ENCODE measurements at regions of chr20 and their contacts with region 1.

Region 1: DNA sequence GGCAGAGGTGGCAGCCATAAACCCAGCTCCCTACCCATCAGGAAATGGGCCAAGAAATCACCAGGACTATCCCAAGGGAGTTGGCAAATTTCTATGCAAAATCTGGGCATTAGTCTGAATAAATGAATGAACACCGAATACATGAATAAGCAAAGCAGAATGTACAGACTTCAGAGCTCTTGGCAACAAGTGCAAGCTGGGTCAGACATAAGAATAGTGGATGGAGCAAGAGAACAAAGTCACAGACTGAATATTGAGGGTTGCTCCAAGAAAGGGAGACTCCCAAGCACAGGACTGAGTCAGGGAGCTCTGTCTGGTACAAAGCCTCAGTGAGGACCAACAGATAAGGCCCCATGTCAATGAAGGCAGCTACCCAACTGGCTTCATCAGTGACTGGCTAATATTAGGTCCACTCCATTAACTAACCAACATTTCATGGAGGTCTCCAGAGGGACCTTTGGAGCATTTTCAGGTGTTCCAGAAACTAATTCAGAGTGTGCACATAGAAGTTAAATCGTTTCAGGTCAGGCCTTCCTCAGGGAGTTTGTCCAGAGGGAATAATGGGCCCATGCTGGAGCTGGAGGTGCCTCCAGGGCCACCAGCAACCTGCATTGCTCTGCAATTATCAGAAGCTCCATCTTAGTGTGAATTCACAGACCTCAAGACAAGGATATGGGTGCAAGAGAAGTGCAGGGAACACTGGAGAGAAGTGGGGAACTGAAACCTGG is 191.5 kb upstream of the RALGAPA2 start:
- DNase-seq: no peak
- H3K4me3 ChIP-seq: no peak overlapping the region
- H3K27ac ChIP-seq: no peak overlapping the region
- H3K4me1 ChIP-seq: no peaks in the 10 kb centered on the region
- H3K27me3 ChIP-seq: no peaks in the 10 kb centered on the region
- CTCF ChIP-seq: no peak
- POLR2A ChIP-seq: no peak

Region 2: DNA sequence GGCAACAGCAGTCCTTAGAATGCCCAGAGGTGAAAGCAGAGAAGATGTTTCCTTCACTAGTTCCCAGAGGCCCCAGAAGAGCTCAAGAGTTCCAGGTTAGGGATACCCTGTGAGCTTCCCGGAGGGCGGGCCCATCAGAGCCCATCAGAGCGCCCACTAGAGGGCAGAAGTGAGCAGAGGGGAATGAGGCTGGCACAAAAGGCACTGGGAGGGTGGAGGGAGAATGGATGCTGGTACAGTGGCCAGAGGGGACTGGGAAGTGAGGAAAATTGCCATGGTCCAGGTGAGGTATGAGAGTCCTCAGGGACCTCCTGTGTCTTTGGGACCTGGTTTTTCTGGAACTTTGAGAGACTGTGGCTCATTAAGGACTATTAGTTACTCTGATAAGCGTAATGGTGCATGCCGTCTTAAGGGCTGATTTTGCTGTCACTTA is 144.9 kb after region 1 on chr20:
- intact Hi-C with region 1: loop called (anchors 10 kb)
- DNase-seq: peak; percentile 17 to 31
- H3K4me3 ChIP-seq: no peak overlapping the region
- H3K27ac ChIP-seq: no peak overlapping the region
- H3K4me1 ChIP-seq: no peaks in the 10 kb centered on the region
- H3K27me3 ChIP-seq: no peaks in the 10 kb centered on the region
- CTCF ChIP-seq: peak in 5 of 6 experiments; percentile 19 to 68 (median 46)
- POLR2A ChIP-seq: no peak